Activated CD4-positive, alpha-beta memory T cell treated with anti-CD3 and anti-CD28 coated beads, Interleukin-2, amount 10 ng/mL, durations not matched to agents 7 days and 5 days (primary cell): ENCODE measurements at regions of chr3 and their contacts with region 1.

Region 1: DNA sequence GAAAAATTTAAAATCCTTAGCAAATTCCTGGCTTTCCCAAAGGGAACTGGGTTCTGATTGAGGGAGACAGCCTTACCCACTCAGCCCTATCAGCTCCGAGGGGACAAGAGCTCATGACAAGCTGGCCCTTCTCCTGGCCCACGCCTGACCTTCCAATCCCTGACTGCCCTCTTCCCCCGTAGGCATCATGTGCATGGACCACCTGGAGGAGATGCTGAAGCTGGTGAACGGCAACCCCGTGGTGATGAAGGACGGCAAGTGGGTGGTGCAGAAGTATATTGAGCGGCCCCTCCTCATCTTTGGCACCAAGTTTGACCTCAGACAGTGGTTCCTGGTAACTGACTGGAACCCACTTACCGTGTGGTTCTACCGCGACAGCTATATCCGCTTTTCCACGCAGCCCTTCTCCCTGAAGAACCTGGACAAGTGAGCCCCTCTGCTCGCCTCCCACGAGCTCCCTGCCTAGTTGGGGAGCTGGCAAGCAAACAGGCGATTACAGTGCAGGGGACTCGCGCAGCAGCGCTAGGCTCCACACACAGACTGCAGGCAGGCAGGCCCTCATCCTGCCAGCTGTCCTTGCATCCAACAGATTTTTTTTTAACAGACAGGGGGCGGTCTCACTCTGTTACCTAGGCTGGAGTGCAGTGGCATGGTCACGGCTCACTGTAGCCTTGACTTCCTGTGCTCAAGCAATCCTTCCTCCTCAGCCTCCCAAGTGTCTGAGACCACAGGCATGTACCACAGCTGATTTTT is 16.8 kb downstream of the RPUSD3 start:
- DNase-seq: peak; percentile 35
- H3K4me3 Mint-ChIP-seq: no peak overlapping the region
- H3K27ac Mint-ChIP-seq: no peak overlapping the region
- H3K4me1 Mint-ChIP-seq: peaks cover 3% of the 10 kb centered on the region
- H3K27me3 Mint-ChIP-seq: no peaks in the 10 kb centered on the region

Region 2: DNA sequence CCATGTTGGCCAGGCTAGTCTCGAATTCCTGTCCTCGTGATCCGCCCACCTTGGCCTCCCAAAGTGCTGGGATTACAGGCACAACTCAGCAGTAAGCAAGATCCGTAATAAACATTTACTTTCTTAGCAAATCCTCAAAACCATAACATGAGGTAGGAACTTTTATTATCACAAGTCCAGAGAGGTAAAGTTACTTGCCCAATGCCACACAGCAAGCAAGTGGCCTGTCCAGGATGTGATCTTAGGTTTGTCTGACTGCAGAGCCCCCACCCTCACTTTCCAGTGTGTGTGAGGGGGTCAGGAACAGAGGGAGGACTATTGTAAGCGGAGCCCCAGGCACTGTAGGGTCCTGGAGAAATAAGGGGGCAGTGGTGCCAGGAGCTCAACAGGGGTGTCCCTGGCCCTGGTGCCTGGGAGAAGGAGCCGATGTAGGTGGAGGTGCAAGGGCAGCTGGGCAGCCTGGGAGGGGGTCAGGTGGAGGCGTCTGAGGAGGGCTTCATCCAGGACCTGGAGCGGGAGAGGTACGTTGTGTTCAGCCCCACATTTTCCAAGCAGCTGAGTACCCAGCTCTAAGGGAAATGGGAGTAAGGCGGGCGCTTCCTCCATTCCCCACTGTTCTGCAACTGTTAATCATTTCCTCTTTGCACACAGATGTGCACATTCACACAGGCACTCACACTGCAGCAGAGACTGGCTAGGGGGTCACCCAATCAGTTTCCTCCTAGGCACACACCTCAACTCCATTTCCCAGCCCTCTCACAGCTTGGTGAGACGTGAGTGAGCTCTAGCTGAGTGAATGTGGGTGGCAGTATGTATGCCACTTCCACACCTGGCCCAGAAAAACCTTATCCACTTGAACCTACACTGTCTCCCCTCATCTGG is 11.0 kb after region 1 on chr3:
- CTCF ChIA-PET with region 1: interaction called, 12 read pairs
- POLR2A ChIA-PET with region 1: interaction called, 3 read pairs
- DNase-seq: no peak
- H3K4me3 Mint-ChIP-seq: no peak overlapping the region
- H3K27ac Mint-ChIP-seq: peak overlapping the region; percentile 58
- H3K4me1 Mint-ChIP-seq: peaks cover 11% of the 10 kb centered on the region
- H3K27me3 Mint-ChIP-seq: no peaks in the 10 kb centered on the region

Region 3: GRCh38 chr3:9946112-9947024 is 119.4 kb after region 1 on chr3:
- CTCF ChIA-PET with region 1: interaction called, 14 read pairs
- POLR2A ChIA-PET with region 1: no interaction called
- DNase-seq: peak; percentile 85
- H3K4me3 Mint-ChIP-seq: peak overlapping the region; percentile 75
- H3K27ac Mint-ChIP-seq: peak overlapping the region; percentile 16
- H3K4me1 Mint-ChIP-seq: peaks cover 15% of the 10 kb centered on the region
- H3K27me3 Mint-ChIP-seq: no peaks in the 10 kb centered on the region

Region 4: GRCh38 chr3:10122724-10123123 is 295.7 kb after region 1 on chr3:
- CTCF ChIA-PET with region 1: no interaction called
- POLR2A ChIA-PET with region 1: no interaction called
- DNase-seq: no peak
- H3K4me3 Mint-ChIP-seq: no peak overlapping the region
- H3K27ac Mint-ChIP-seq: peak overlapping the region; percentile 1
- H3K4me1 Mint-ChIP-seq: peaks cover 41% of the 10 kb centered on the region
- H3K27me3 Mint-ChIP-seq: no peaks in the 10 kb centered on the region